ENCODE measurements at regions of chr7 and their contacts with region 1.

Region 1: GRCh38 chr7:107743567-107744344 is at the start of gene CBLL1:
- DNase-seq: peak; percentile 98 to 99
- ATAC-seq: peak; percentile 100
- H3K4me3 ChIP-seq: peak within 1 kb of the TSS; percentile 57 to 81
- H3K27ac ChIP-seq: peak within 1 kb of the TSS; percentile 80 to 87
- H3K4me1 ChIP-seq: peaks cover 2 to 7% of the 10 kb centered on the region in 2 donors
- H3K27me3 ChIP-seq: no peaks in the 10 kb centered on the region
- total RNA-seq, gene CBLL1: 20.4 to 23.4 TPM

Region 2: DNA sequence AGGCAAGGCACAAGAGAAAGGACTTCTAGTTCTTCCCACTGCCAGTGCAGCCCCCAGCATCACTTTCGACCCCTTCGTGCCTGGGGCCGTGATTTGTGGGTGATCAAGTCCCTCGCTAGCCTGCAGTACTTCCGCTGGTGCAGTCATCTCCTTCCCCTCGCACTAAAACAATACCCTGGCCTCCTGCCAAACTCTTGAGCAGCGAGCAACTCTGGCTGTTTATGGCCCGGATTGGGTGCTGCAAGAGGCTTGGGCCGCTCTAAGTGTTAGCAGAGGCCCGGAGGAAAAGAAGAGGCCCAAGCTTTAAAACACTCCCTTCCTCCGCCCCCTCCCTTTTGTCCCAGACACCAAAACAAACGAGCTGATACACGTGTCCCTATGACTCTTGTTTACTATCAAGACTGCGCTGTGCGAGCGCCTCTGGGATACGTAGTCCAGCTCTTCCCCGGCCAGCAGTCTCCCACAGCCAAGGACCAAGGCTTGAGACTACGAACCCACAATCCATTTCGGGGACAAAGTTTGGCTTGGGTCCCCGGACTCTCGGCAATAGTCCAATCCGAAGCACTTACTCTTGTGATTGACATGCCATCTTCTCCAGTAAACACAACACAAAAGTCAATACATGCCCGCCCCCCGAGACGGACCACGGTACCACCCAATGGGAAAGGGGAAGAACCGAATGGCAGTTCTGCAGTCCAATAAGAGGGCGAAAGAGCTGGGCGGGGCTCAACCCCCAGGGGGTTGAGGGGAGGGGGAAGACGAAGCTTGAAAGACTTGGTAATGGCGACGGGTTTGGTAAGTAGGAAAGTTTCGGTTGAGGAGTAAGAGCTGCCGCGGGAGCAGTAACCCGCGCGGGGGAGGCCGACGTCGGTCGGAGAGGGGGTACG is 575.3 kb before region 1 on chr7 and contains the start of gene HBP1:
- intact Hi-C with region 1: loop called in 1 of 2 experiments (anchors 1 kb)
- DNase-seq: peak; percentile 98 to 100
- ATAC-seq: peak; percentile 96
- H3K4me3 ChIP-seq: peak within 1 kb of the TSS; percentile 92 to 98
- H3K27ac ChIP-seq: peak within 1 kb of the TSS; percentile 95 to 97
- H3K4me1 ChIP-seq: peaks cover 0 to 2% of the 10 kb centered on the region in 2 donors
- H3K27me3 ChIP-seq: no peaks in the 10 kb centered on the region
- total RNA-seq, gene HBP1: 51.8 to 78.7 TPM

Region 3: DNA sequence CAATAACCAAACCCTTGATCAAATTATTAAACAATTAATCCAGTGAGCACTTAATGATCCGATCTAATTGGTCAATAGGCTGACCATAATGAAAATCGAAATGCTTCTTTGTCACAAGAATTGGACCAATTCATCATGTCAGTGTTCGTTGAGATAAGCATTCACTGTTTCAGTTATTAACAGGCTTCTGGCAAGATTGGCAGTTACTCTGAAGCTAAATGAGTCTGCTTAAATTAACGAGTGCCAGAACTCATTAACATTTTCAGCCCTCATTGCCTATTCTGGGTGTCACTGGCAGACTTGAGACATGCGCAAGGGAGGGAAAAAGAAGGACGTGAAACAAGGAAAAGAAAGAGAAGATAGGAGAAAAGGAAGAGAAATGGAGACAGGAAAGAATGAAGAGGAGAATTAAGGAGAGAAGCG is 89.9 kb after region 1 on chr7:
- intact Hi-C with region 1: no loop called
- DNase-seq: no peak
- ATAC-seq: no peak
- H3K4me3 ChIP-seq: no peak overlapping the region
- H3K27ac ChIP-seq: no peak overlapping the region
- H3K4me1 ChIP-seq: no peaks in the 10 kb centered on the region
- H3K27me3 ChIP-seq: no peaks in the 10 kb centered on the region

Region 4: DNA sequence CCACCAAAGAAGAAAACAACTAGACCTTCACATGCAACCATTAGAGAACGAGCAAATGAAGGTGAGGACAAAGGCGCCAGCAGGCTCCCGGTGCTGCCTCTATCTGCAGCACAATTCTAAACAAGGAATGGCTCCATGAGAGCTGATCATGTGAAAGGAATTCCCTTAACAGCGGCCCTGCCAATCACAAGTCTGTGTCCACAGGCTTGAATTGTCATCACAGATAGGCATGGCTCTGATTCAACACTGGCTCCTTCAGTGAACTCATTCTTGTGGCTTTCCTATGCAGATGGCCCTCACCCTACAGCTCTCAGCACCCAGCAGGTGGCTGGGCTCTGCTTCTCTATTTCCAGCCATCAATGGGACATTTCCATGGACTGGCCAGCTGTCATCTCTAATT is 223.0 kb after region 1 on chr7:
- intact Hi-C with region 1: no loop called
- DNase-seq: peak in 1 of 2 donors; percentile 55
- ATAC-seq: peak; percentile 65
- H3K4me3 ChIP-seq: no peak overlapping the region
- H3K27ac ChIP-seq: peak overlapping the region; percentile 68 to 81
- H3K4me1 ChIP-seq: peaks cover 0 to 6% of the 10 kb centered on the region in 2 donors
- H3K27me3 ChIP-seq: no peaks in the 10 kb centered on the region

Measured in aorta (tissue), 5 donors.